ENCODE measurements at regions of chr11 and their contacts with region 1.

Region 1: DNA sequence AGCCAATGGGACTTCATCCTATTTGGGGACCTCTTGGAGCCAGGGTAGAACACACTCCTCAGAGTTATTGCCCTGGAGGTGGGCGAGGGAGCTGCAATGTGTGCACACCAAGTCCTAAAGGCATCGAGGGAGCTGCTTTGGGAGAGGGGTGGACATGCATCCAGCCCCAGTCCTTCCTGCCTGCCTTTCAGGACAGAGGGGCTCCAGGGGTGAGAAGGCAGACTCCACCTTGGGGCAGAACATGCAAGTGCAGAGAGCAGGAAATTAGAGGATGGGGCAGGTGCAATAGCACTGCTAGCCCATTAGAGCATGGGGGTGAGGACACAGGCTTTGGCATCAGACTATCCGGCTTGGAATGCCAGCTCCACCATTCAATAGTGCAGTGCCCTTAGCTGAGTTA is 288.5 kb downstream of the OPCML start:
- DNase-seq: no peak
- ATAC-seq: no peak
- H3K4me3 ChIP-seq: no peak overlapping the region
- H3K27ac ChIP-seq: no peak overlapping the region
- H3K4me1 ChIP-seq: no peaks in the 10 kb centered on the region
- H3K27me3 ChIP-seq: peaks cover 0 to 48% (median 16%) of the 10 kb centered on the region in 7 donors
- CTCF ChIP-seq: no peak

Region 2: DNA sequence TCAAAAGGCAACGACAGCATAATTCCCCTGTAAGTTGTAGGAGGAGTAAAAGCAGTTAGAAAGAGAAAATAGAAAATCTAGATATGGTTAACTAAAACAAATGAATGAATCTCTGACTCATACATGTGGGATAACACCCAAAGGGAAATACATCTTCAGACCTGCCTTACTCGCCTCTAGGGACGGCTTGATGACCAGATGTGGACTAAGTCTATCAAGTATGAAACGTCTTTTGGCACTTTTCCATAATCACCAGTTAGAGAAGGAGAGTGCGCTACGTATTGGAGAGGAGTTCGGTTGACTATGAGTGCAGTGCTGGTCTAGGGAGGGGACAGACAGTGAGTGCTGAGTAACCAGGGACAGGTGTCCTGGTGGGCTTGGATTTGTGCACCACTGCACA is 171.5 kb before region 1 on chr11:
- intact Hi-C with region 1: loop called in 1 of 10 experiments (anchors 5 kb)
- DNase-seq: no peak
- ATAC-seq: no peak
- H3K4me3 ChIP-seq: no peak overlapping the region
- H3K27ac ChIP-seq: no peak overlapping the region
- H3K4me1 ChIP-seq: no peaks in the 10 kb centered on the region
- H3K27me3 ChIP-seq: peaks cover 0 to 67% (median 52%) of the 10 kb centered on the region in 7 donors
- CTCF ChIP-seq: no peak